Activated T-helper 1 cell treated with anti-CD3 and anti-CD28 coated beads, Interleukin-12 subunit alpha, Interleukin-12 subunit beta, Interleukin-2, Interleukin-4 antibody, amounts not matched to agents 30 ng/mL and 10 ng/mL and 1 ng/mL, durations not matched to agents 14 hours and 24 hours and 36 hours (primary cell): ENCODE measurements at regions of chr3 and their contacts with region 1.

Region 1: GRCh38 chr3:44624749-44625480 is at the start of gene ZNF197:
- DNase-seq: peak; percentile 54
- H3K4me3 Mint-ChIP-seq: peak within 1 kb of the TSS; percentile 90
- H3K27ac Mint-ChIP-seq: peak within 1 kb of the TSS; percentile 80
- H3K4me1 Mint-ChIP-seq: peaks cover 25% of the 10 kb centered on the region
- H3K27me3 Mint-ChIP-seq: no peaks in the 10 kb centered on the region
- total RNA-seq, gene ZNF197: 11.6 and 12.0 TPM in 2 replicates

Region 2: GRCh38 chr3:44510000-44510368 is 114.9 kb before region 1 on chr3:
- intact Hi-C with region 1: loop called (anchors 2 kb)
- DNase-seq: no peak
- H3K4me3 Mint-ChIP-seq: peak overlapping the region; percentile 90
- H3K27ac Mint-ChIP-seq: peak overlapping the region; percentile 75
- H3K4me1 Mint-ChIP-seq: peaks cover 38% of the 10 kb centered on the region
- H3K27me3 Mint-ChIP-seq: no peaks in the 10 kb centered on the region

Region 3: GRCh38 chr3:44554626-44555592 is 70.0 kb before region 1 on chr3 and contains the start of gene ZKSCAN7:
- intact Hi-C with region 1: loop called (anchors 1 kb)
- DNase-seq: peak; percentile 9
- H3K4me3 Mint-ChIP-seq: peak within 1 kb of the TSS; percentile 89
- H3K27ac Mint-ChIP-seq: peak within 1 kb of the TSS; percentile 65
- H3K4me1 Mint-ChIP-seq: peaks cover 12% of the 10 kb centered on the region
- H3K27me3 Mint-ChIP-seq: no peaks in the 10 kb centered on the region
- total RNA-seq, gene ZKSCAN7: 0.73 and 0.80 TPM in 2 replicates

Region 4: GRCh38 chr3:44648564-44649229 is 23.8 kb after region 1 on chr3 and contains the start of gene ZNF35:
- intact Hi-C with region 1: loop called (anchors 1 kb)
- DNase-seq: peak; percentile 1
- H3K4me3 Mint-ChIP-seq: peak within 1 kb of the TSS; percentile 86
- H3K27ac Mint-ChIP-seq: peak within 1 kb of the TSS; percentile 40
- H3K4me1 Mint-ChIP-seq: no peaks in the 10 kb centered on the region
- H3K27me3 Mint-ChIP-seq: no peaks in the 10 kb centered on the region
- total RNA-seq, gene ZNF35: 4.8 and 5.5 TPM in 2 replicates

Region 5: GRCh38 chr3:44685128-44685800 is 60.3 kb after region 1 on chr3:
- intact Hi-C with region 1: loop called (anchors 2 kb)
- DNase-seq: peak; percentile 16
- H3K4me3 Mint-ChIP-seq: peak overlapping the region; percentile 82
- H3K27ac Mint-ChIP-seq: no peak overlapping the region
- H3K4me1 Mint-ChIP-seq: peaks cover 12% of the 10 kb centered on the region
- H3K27me3 Mint-ChIP-seq: peaks cover 8% of the 10 kb centered on the region

Region 6: GRCh38 chr3:44861412-44862220 is 236.7 kb after region 1 on chr3 and contains the start of gene TMEM42:
- intact Hi-C with region 1: loop called (anchors 2 kb)
- DNase-seq: peak; percentile 87
- H3K4me3 Mint-ChIP-seq: peak within 1 kb of the TSS; percentile 90
- H3K27ac Mint-ChIP-seq: peak within 1 kb of the TSS; percentile 90
- H3K4me1 Mint-ChIP-seq: peaks cover 33% of the 10 kb centered on the region
- H3K27me3 Mint-ChIP-seq: no peaks in the 10 kb centered on the region
- total RNA-seq, gene TMEM42: 8.6 and 10.0 TPM in 2 replicates